IMR-90 (cell line): ENCODE measurements at regions of chr13 and their contacts with region 1.

Region 1: DNA sequence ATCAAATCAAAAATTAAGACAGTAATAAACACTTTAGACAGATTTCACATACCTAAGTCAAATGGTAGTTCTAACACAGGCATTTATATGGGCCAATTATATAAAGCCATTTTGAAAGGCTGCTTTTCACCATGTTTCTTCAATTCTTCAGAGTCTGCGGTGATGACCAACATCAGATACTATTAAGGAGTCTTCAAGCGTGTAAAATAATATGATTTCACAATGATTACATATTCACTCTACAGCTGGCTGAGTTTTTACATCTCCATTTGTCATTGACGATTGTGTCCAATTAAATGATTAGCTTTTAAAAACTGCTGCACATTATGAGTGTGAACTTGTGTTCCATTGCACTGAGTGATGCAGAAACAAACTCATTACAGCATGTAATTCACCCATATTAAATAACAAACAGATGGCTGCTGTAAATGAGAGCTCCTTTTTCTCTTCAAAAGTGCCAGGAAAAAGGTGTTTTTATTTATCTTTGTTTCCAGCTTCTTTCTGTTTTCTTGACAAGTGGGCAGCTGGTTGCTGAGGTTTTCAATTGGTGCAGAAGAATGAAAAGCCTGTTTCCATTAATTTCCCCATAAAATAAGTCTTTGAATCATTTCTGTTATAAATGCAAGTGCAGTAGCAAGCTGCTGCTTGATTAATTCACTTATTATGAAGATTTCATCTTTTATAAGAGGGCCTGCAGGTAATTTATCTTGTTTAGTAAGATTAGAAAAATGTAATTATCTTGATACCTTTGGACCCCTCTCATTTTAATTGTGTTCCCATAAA is 676.1 kb upstream of the KLHL1 start:
- DNase-seq: no peak
- ATAC-seq: no peak
- H3K4me3 ChIP-seq: no peak overlapping the region
- H3K27ac ChIP-seq: no peak overlapping the region
- H3K4me1 ChIP-seq: no peaks in the 10 kb centered on the region
- H3K27me3 ChIP-seq: no peaks in the 10 kb centered on the region
- CTCF ChIP-seq: no peak
- POLR2A ChIP-seq: no peak
- RAD21 ChIP-seq: no peak

Region 2: DNA sequence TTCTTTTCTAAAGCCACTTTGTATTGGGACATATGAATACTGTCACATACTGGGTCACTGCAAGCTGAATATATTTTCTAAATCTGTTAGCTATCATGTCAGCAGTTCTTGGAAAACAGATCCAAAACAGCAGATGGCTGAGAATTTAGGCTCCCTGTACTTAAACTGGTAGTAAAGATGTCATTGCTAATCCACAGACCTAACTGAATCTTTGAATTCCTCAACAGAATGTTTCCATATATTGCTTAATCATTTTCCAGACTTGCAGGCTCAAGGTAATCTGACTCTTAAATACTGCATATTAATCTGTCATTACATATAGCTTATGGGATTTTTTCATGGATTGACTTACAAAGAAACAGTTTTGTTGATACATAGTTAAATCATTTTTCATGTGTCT is 37.1 kb before region 1 on chr13:
- CTCF ChIA-PET with region 1: no interaction called
- POLR2A ChIA-PET with region 1: no interaction called
- dilution Hi-C with region 1: no loop called
- in situ Hi-C with region 1: no loop called
- intact Hi-C with region 1: loop called (anchors 2 kb)
- DNase-seq: no peak
- ATAC-seq: no peak
- H3K4me3 ChIP-seq: no peak overlapping the region
- H3K27ac ChIP-seq: no peak overlapping the region
- H3K4me1 ChIP-seq: no peaks in the 10 kb centered on the region
- H3K27me3 ChIP-seq: no peaks in the 10 kb centered on the region
- CTCF ChIP-seq: no peak
- POLR2A ChIP-seq: no peak
- RAD21 ChIP-seq: no peak

Region 3: GRCh38 chr13:70769817-70770216 is 14.6 kb before region 1 on chr13:
- CTCF ChIA-PET with region 1: no interaction called
- POLR2A ChIA-PET with region 1: no interaction called
- dilution Hi-C with region 1: no loop called
- in situ Hi-C with region 1: no loop called
- intact Hi-C with region 1: no loop called
- DNase-seq: no peak
- ATAC-seq: no peak
- H3K4me3 ChIP-seq: no peak overlapping the region
- H3K27ac ChIP-seq: no peak overlapping the region
- H3K4me1 ChIP-seq: no peaks in the 10 kb centered on the region
- H3K27me3 ChIP-seq: no peaks in the 10 kb centered on the region
- CTCF ChIP-seq: no peak
- POLR2A ChIP-seq: no peak
- RAD21 ChIP-seq: no peak